ENCODE measurements at regions of chr22 and their contacts with region 1.

Region 1: GRCh38 chr22:29603358-29604075 is at the start of gene NF2:
- DNase-seq: peak; percentile 98 to 100 (median 100)

Region 2: GRCh38 chr22:29184849-29185490 is 418.5 kb before region 1 on chr22:
- intact Hi-C with region 1: no loop called
- DNase-seq: peak in 1 of 42 donors; percentile 26

Region 3: DNA sequence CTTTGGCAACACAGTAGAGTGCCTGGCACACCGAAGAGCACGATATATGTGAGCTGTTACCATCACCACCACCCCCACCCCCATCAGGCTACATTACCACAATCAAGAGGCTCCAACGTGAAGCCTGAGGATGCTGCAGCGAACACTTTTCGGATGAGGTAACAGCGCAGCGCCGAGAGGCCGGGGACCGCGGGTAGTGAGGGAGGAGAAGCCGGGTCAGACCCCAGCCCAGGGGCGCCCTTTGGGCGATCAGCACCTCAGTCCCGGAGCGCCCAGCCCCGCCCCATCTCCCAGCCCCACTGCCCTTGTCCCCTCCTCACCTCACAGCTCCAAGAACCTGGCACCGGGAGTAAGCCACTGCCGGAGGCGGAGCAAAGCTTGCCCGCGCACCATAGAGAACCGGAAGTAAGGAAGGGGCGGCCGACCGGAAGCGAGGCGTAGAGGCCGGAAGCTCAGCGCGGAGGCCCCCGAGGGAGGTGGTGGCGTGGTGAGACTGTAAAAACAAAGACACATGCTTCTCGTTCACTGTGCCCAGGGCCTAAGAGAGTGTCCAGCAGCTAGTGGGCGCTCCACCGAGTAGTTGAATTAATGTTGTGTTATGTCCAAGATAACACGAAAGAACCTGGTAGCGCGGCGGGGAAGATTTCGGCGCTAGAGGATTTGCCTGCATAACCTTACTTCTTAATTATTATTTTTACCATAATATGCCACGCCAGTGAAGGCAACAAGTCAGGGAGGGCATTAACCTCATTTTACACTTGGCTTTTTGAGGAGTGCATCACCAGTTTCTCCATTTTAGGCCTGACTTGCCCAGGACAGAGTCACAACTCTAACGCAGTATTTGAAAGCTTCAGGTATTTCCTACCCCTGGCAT is 49.9 kb before region 1 on chr22 and contains the start of gene THOC5:
- intact Hi-C with region 1: loop called (anchors 10 kb)
- DNase-seq: peak; percentile 89 to 97 (median 95)

Region 4: GRCh38 chr22:29701155-29701999 is 97.9 kb after region 1 on chr22:
- intact Hi-C with region 1: no loop called
- DNase-seq: no peak

Measured in head of caudate nucleus (tissue), 42 donors.